Natural killer cell (primary cell): ENCODE measurements at regions of chr2 and their contacts with region 1.

Region 1: DNA sequence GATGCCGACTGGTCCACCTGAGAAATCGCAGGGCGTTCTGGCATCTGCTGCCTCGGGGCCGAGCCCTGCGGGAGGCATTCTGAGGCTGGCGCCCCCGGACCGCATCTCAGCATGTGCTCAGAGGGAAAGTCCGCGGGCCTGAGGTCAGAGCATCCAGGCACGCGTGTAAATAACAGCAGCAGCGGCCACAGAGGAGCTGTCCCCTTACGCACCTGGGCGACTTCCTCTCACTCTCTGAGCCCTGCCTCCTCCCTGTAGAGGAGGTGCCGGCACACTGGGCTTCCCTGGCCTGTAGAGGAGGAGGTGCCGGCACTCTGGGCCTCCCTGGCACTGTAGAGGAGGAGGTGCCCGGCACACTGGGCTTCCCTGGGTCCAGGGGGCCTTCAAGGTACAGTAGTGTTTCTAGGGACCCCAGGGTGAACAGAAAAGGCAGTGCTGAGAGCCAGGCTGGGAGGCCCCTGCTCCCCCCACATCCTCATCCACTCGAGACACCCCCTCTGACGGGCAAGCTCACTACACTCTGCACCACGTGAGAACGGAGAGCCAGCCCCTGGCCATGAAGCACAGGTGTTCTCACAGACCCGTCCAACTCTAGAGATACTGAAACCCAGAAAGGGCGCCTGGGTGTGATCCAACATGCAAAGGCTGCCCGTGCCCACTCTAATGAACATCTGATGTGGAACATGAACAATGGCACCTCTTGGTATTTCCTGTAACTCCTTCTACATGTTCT is 263.5 kb downstream of the HDAC4 start:
- DNase-seq: peak in 1 of 2 donors; percentile 20
- ATAC-seq: peak; percentile 75 to 80 (median 77)
- H3K4me3 ChIP-seq: no peak overlapping the region
- H3K4me3 Mint-ChIP-seq: peak overlapping the region; percentile 67
- H3K27ac ChIP-seq: peak overlapping the region; percentile 16
- H3K27ac Mint-ChIP-seq: peak overlapping the region; percentile 73 to 83
- H3K4me1 ChIP-seq: peaks cover 24% of the 10 kb centered on the region
- H3K4me1 Mint-ChIP-seq: peaks cover 35 to 47% of the 10 kb centered on the region in 2 donors
- H3K27me3 ChIP-seq: no peaks in the 10 kb centered on the region
- H3K27me3 Mint-ChIP-seq: peaks cover 0 to 18% of the 10 kb centered on the region in 2 donors
- CTCF ChIP-seq: no peak

Region 2: DNA sequence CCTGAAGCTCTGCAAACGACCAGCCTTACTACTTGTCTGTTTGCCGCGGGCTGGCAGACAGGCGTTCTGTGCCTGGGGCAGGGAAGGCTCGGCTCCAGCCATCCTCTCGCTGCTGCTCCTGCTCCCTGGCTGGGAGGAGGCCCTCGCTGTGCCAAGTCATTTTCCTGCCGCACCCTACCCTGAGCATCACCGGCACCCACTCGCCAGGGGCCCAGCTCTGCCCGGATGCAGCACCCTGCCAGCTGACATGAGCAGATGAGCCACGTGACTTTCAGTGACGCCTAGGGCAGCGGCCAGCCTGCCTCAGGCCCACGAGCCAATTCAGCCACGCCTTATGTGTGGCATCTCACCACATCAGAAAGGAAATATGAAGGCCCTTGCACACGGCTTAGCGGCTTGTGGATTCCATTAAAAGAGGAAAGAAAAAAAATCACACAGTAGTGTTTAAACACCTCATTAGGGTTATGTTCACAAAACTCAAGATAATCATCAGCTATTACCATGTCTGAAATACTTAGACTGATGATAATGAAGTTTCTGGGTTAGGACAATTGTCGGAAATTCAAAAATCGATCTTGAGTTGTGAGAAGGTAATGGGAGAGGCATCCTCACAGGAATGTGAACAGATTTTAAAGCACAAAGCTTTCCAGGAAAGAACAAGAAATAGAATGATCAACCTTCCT is 38.9 kb before region 1 on chr2:
- intact Hi-C with region 1: loop called (anchors 1 kb)
- DNase-seq: peak in 1 of 2 donors; percentile 55
- ATAC-seq: peak; percentile 84 to 93 (median 90)
- H3K4me3 ChIP-seq: no peak overlapping the region
- H3K4me3 Mint-ChIP-seq: peak overlapping the region; percentile 82
- H3K27ac ChIP-seq: peak overlapping the region; percentile 45
- H3K27ac Mint-ChIP-seq: peak overlapping the region; percentile 92
- H3K4me1 ChIP-seq: peaks cover 21% of the 10 kb centered on the region
- H3K4me1 Mint-ChIP-seq: peaks cover 21 to 28% of the 10 kb centered on the region in 2 donors
- H3K27me3 ChIP-seq: no peaks in the 10 kb centered on the region
- H3K27me3 Mint-ChIP-seq: no peaks in the 10 kb centered on the region
- CTCF ChIP-seq: no peak